ENCODE measurements at regions of chr4 and their contacts with region 1.

Region 1: DNA sequence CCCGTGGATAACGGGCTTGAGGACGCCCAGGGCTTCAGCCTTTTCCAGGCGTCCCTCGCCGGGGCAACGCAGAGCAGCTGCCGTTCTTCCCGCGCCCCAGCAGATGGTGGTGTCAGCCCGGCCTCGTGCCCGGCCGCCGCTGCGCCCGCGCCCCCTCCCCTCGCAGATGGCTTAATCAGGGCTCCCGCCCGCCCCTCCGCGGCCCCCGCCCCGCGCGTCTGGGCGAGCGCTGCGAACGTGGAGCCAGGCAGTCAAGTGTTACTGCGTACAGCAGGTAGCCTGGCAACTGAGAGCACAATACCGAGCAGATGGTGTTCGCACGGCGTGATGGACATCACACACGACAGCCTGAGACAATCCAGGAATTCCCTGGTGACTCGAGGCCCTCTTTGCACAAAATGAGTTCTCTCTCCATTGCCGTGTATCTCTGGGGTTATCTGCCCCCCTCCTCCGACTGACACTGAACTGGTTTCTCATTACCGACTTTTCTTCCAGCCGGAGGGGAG is 69.3 kb downstream of the MGST2 start:
- DNase-seq: peak; percentile 91
- H3K4me3 ChIP-seq: peak overlapping the region; percentile 48 to 69
- H3K27ac ChIP-seq: peak overlapping the region; percentile 83 to 93
- H3K4me1 ChIP-seq: peaks cover 45% of the 10 kb centered on the region
- H3K27me3 ChIP-seq: no peaks in the 10 kb centered on the region
- CTCF ChIP-seq: peak; percentile 69 to 77 (median 74)
- POLR2A ChIP-seq: no peak

Region 2: GRCh38 chr4:139665690-139666529 is 69.0 kb before region 1 on chr4 and contains the start of gene MGST2:
- intact Hi-C with region 1: loop called (anchors 10 kb)
- DNase-seq: peak; percentile 87
- H3K4me3 ChIP-seq: peak within 1 kb of the TSS; percentile 61 to 80
- H3K27ac ChIP-seq: peak within 1 kb of the TSS; percentile 89 to 91
- H3K4me1 ChIP-seq: peaks cover 16% of the 10 kb centered on the region
- H3K27me3 ChIP-seq: no peaks in the 10 kb centered on the region
- CTCF ChIP-seq: no peak
- POLR2A ChIP-seq: no peak
- total RNA-seq, gene MGST2: 82.2 to 87.6 TPM

Region 3: GRCh38 chr4:139833151-139833910 is 98.4 kb after region 1 on chr4:
- intact Hi-C with region 1: no loop called
- DNase-seq: no peak
- H3K4me3 ChIP-seq: no peak overlapping the region
- H3K27ac ChIP-seq: no peak overlapping the region
- H3K4me1 ChIP-seq: no peaks in the 10 kb centered on the region
- H3K27me3 ChIP-seq: no peaks in the 10 kb centered on the region
- CTCF ChIP-seq: no peak
- POLR2A ChIP-seq: no peak

Region 4: DNA sequence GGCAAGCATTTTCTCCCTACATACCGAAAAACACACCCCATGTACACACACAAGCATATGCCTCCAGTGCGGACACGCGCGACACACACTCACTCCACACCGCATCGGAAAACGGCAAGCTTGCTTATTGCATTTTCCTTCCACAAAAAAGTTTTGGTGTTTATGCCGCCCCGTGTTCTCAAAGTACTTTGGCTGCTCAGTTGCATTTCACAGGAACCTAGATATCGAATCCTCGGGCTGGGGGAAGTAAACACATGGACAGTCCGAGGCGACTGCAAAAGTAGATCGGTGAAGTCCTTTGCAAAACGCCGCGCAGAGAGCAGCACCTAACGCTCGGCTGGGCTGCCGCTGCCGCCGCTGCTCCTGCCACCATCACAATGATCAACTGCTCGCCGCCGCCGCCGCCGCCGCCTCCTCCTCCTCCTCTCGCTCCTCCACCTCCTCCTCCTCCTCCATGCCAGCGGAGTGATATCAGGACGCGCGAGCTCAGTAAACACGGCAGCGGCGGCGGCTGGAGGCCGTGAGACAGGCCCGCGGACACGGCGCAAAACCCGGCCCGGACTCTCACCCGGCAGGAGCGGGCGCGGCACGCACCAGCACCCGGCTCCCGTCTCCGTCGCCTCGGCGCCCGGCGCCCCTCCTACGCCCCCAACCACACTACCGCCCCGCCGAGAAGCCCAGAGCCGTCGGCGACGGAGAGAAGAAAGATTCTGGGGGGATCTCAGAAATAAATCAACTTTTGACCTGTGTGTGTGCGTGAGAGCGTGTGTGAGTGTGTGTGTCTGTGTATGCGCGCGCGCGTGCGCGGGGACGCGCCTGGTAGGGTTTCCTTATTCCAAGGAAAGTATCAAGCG is 419.0 kb after region 1 on chr4 and contains the start of gene MAML3:
- intact Hi-C with region 1: loop called (anchors 5 kb)
- DNase-seq: peak; percentile 96
- H3K4me3 ChIP-seq: peak within 1 kb of the TSS; percentile 73 to 96
- H3K27ac ChIP-seq: peak within 1 kb of the TSS; percentile 93 to 98
- H3K4me1 ChIP-seq: peaks cover 9% of the 10 kb centered on the region
- H3K27me3 ChIP-seq: no peaks in the 10 kb centered on the region
- CTCF ChIP-seq: no peak
- POLR2A ChIP-seq: peak; percentile 3
- total RNA-seq, gene MAML3: 18.8 to 21.2 TPM

Region 5: DNA sequence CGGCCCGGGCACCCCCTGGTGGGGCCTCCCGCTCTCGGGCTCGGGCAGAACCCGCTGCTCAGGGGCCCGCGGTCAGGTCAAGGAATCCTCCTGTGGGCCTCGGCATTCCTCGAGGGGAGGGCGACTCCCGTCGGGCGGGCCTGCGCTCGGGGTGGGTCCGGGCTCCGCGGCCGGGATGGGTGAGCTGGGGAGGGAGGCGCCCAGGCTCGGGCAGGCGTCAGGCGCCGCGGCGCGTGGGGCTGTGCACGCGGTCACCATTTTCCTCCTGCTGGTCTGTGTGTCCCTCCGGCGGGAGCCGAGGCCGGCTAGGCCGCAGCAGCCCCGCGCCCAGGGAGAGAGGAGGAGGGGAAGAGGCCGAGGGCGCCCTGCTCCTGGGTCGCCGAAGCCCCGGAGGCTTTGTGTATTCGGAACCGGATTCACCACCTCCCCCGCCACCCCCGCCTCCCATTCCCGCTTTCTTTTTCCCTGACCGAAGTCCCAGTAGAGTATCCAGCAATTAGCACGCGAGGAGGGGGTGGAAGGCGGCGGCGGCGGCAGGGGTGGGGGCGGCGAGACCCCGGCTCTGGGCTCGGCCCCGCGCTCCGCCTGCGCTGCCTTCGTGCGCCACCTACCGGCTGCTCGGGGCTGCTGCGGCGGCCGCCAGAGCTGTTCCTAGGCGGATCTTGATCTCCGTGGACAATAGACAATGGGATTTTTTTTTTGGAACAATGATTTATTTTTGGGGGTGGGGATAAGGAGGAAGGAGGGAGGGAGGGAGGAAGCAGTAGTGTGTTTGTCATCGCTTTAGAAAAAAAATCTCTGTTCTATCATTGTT is 518.0 kb after region 1 on chr4:
- intact Hi-C with region 1: loop called (anchors 5 kb)
- DNase-seq: peak; percentile 85
- H3K4me3 ChIP-seq: peak overlapping the region; percentile 63 to 85
- H3K27ac ChIP-seq: peak overlapping the region; percentile 91 to 92
- H3K4me1 ChIP-seq: peaks cover 18% of the 10 kb centered on the region
- H3K27me3 ChIP-seq: no peaks in the 10 kb centered on the region
- CTCF ChIP-seq: peak; percentile 82 to 99 (median 91)
- POLR2A ChIP-seq: no peak

Region 6: DNA sequence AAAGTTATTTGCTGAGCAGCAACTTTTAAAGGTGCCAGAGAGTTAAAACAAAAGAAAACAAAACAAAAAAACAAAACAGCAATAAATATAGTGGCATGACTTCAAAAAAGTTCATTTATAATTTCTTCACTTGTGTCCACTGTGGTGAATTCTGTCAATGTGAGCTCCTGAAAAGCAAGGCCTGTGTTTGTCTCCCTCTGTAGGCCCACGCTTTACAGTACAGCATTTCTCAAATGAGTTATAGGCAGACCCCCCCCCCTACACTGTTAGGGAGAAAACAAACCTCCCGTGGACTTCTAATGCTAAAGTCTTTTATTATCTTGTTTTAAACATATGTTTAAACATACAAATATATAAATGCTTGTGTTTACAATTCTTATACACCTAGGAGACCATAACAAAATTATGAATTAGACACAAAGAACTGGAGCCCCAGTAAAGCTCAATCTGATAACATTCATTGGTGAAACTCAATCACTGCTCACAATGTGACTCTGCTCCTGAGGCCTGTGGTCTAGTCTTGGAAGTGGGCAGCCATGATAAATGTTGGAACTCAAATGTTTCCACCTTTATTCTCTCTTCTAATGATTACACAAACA is 591.6 kb after region 1 on chr4:
- intact Hi-C with region 1: loop called (anchors 10 kb)
- DNase-seq: peak; percentile 68
- H3K4me3 ChIP-seq: no peak overlapping the region
- H3K27ac ChIP-seq: no peak overlapping the region
- H3K4me1 ChIP-seq: no peaks in the 10 kb centered on the region
- H3K27me3 ChIP-seq: no peaks in the 10 kb centered on the region
- CTCF ChIP-seq: peak in 2 of 3 experiments; percentile 67 to 68
- POLR2A ChIP-seq: no peak